ENCODE measurements at regions of chr1 and their contacts with region 1.

Region 1: DNA sequence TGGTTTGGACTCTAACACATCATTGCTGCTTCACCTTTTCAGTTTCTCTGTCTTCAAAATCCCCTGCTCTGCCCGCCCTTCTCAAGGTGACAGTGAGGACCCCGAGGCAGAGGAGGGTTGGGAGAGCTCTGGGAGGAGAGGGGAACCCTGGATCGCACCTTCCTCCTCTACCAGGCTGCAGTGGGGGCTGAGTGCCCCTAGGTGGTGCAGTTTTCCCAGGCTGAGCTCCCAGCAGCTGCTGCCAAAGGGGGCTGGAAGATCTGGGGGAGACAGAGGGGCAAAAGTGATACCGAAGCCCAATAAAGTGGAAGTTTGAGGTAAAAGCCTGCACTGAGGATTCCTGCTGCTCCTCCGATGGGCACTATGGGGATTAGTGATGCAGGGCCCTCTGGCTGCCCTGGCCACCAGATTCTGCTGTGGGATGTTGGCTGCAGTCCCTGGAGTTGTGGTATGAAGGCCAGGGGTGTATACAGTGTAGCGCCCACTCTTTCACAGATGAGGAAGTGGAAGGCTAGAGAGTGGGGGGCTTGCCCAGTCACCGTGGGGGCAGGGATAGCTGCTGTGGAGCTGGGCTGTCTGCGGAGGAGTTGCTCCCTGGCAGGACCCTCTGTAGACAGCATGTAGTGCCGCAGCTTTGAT is 40.7 kb upstream of the SCMH1 start:
- DNase-seq: peak; percentile 64

Region 2: GRCh38 chr1:41371630-41372599 is 89.1 kb after region 1 on chr1:
- CTCF ChIA-PET with region 1: no interaction called
- POLR2A ChIA-PET with region 1: no interaction called
- DNase-seq: no peak

Region 3: GRCh38 chr1:41432481-41433280 is 149.9 kb after region 1 on chr1:
- CTCF ChIA-PET with region 1: interaction called, 17 read pairs
- POLR2A ChIA-PET with region 1: no interaction called
- DNase-seq: peak; percentile 90

Measured in HEK293T (cell line).